ENCODE measurements at regions of chr1 and their contacts with region 1.

Region 1: DNA sequence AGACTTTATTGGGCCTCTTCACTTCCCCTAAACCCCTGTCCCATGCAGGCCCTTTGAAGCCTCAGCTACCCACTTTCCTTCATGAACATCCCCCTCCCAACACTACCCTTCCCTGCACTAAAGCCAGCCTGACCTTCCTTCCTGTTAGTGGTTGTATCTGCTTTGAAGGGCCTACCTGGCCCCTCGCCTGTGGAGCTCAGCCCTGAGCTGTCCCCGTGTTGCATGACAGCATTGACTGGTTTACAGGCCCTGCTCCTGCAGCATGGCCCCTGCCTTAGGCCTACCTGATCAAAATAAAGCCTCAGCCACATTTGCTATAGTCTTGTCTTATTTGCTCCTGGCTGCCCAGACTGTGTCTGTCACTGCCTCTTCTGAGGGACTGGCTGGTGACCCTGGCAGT is 5.5 kb downstream of the GSTM4 start:
- DNase-seq: no peak
- ATAC-seq: no peak
- H3K4me3 ChIP-seq: no peak overlapping the region
- H3K27ac ChIP-seq: no peak overlapping the region
- H3K4me1 ChIP-seq: peaks cover 0 to 10% of the 10 kb centered on the region in 2 experiments; a peak in 4 of 5 replicates
- H3K27me3 ChIP-seq: no peaks in the 10 kb centered on the region
- CTCF ChIP-seq: no peak
- EP300 ChIP-seq: no peak
- POLR2A ChIP-seq: no peak
- RAD21 ChIP-seq: no peak

Region 2: DNA sequence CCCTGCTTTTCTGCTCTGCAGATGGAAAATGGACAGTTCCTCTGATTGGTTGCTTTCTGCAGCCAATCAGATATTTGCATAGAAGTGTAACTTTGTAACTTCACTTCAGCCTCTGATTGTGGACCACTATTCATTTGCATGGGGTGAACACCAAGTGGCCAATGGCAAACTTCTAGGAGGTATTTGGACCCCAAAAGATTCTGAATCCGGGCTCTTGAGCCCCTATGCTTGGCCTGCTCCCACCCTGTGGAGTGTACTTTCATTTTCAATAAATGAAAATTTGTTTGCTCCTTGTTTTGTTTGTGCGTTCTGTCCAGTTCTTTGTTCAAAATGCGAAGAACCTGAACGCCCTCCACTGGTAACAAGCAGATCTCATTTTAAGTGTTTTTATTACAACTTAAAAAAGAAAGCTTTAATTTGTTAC is 11.9 kb before region 1 on chr1:
- CTCF ChIA-PET with region 1: no interaction called
- POLR2A ChIA-PET with region 1: interaction called, 10 read pairs
- in situ Hi-C with region 1: no loop called
- intact Hi-C with region 1: no loop called
- DNase-seq: peak; percentile 37 to 53 (median 48)
- ATAC-seq: peak; percentile 87
- H3K4me3 ChIP-seq: peak overlapping the region; percentile 19; the same call in 1 of the 2 replicates
- H3K27ac ChIP-seq: no peak overlapping the region
- H3K4me1 ChIP-seq: peaks cover 4% of the 10 kb centered on the region in 2 experiments; a peak in 4 of 5 replicates
- H3K27me3 ChIP-seq: 0 out of 5 replicates have a peak, but pooled peaks cover 0 to 2% of the 10 kb centered on the region in 2 experiments
- CTCF ChIP-seq: peak; percentile 51 to 74 (median 52); a peak in 5 of 6 replicates
- EP300 ChIP-seq: no peak
- POLR2A ChIP-seq: no peak
- RAD21 ChIP-seq: peak; percentile 64 to 74

Region 3: DNA sequence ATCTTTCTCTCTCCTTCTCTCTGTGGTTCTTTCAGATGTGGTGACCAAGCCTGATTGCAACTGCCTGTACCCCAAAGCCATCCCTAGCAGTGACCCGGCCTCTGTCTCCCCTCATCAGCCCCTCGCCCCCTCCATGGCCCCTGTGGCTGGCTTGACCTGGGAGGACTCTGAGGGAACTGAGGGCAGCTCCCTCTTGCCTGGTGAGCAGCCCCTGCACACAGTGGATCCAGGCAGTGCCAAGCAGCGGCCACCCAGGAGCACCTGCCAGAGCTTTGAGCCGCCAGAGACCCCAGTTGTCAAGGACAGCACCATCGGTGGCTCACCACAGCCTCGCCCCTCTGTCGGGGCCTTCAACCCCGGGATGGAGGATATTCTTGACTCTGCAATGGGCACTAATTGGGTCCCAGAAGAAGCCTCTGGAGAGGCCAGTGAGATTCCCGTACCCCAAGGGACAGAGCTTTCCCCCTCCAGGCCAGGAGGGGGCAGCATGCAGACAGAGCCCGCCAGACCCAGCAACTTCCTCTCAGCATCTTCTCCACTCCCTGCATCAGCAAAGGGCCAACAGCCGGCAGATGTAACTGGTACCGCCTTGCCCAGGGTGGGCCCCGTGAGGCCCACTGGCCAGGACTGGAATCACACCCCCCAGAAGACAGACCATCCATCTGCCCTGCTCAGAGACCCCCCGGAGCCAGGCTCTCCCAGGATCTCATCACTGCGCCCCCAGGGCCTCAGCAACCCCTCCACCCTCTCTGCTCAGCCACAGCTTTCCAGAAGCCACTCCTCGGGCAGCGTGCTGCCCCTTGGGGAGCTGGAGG is 261.9 kb after region 1 on chr1:
- CTCF ChIA-PET with region 1: no interaction called
- POLR2A ChIA-PET with region 1: no interaction called
- in situ Hi-C with region 1: no loop called
- intact Hi-C with region 1: no loop called
- DNase-seq: peak; percentile 60 to 66 (median 63)
- ATAC-seq: peak; percentile 89
- H3K4me3 ChIP-seq: no peak overlapping the region
- H3K27ac ChIP-seq: no peak overlapping the region
- H3K4me1 ChIP-seq: peaks cover 9 to 32% of the 10 kb centered on the region in 2 experiments
- H3K27me3 ChIP-seq: no peaks in the 10 kb centered on the region
- CTCF ChIP-seq: peak; percentile 68 to 83 (median 76)
- EP300 ChIP-seq: no peak
- POLR2A ChIP-seq: no peak
- RAD21 ChIP-seq: peak in 1 of 2 experiments; percentile 71; a peak in 3 of 4 replicates